GM12878 (cell line): ENCODE measurements at regions of chr3 and their contacts with region 1.

Region 1: GRCh38 chr3:195259475-195260279 is 11.3 kb downstream of the XXYLT1 start:
- DNase-seq: peak; percentile 69
- ATAC-seq: peak; percentile 85
- H3K4me3 ChIP-seq: peak overlapping the region; percentile 77; the same call in 1 of the 2 replicates
- H3K27ac ChIP-seq: peak overlapping the region; percentile 85
- H3K4me1 ChIP-seq: peaks cover 21% of the 10 kb centered on the region
- H3K27me3 ChIP-seq: no peaks in the 10 kb centered on the region
- CTCF ChIP-seq: peak; percentile 54 to 77 (median 54); a peak in 5 of 6 replicates
- EP300 ChIP-seq: peak; percentile 64 to 82; a peak in 3 of 4 replicates
- POLR2A ChIP-seq: peak; percentile 85
- RAD21 ChIP-seq: peak; percentile 89

Region 2: DNA sequence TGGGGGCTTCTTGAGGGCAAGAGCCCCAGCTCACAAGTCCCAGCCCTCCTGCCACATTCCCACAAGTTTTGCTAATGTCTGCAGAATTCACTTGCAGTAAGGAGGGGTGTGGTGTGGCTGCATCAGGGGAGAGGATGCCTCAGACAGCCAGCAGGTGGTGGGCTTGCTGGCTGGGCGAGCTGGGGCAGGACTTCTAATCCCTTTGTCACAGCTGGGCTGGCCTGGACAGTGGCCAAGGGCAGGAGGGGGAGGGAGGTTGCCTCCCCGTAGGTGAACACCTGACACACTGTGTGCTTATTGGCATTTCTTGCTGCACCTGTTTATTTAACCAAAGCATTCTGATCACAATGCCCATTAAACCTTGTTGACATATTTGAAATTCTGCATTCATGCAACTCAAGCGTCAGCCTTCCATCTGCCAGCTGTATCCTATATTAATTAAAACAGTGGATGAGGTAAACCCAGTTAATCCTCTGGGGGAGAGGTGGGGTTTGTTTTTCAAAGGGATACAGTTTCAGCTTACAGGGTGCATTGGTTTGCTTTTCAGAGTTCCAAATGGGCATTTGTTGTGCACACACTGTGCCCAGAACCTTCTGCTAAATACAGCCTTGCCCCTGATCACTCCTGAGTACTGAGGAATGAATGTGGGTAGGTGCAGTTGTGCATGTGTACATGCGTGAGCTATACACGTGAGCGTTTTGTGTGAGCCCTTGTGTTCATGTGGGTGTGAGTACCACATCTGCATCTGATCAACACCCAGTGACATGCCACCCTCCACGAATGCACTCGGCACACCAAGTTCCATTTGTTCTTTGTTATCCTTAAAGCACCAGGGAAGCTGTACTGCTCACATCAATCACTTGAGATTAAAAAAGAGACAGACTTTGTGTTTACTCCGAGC is 257.5 kb before region 1 on chr3:
- CTCF ChIA-PET with region 1: interaction called, 7 read pairs
- POLR2A ChIA-PET with region 1: no interaction called
- RAD21 ChIA-PET with region 1: interaction called, 7 read pairs
- SMC1A ChIA-PET with region 1: no interaction called
- in situ Hi-C with region 1: loop called (anchors 5 kb)
- intact Hi-C with region 1: loop called (anchors 1 kb)
- DNase-seq: peak; percentile 4
- ATAC-seq: peak; percentile 95
- H3K4me3 ChIP-seq: no peak overlapping the region
- H3K27ac ChIP-seq: no peak overlapping the region
- H3K4me1 ChIP-seq: no peaks in the 10 kb centered on the region
- H3K27me3 ChIP-seq: peaks cover 2% of the 10 kb centered on the region in 2 experiments; a peak in 1 of 4 replicates
- CTCF ChIP-seq: peak; percentile 66 to 81 (median 77)
- EP300 ChIP-seq: no peak
- POLR2A ChIP-seq: no peak
- RAD21 ChIP-seq: peak; percentile 74

Region 3: GRCh38 chr3:195133462-195133861 is 126.2 kb before region 1 on chr3:
- CTCF ChIA-PET with region 1: interaction called, 6 read pairs
- POLR2A ChIA-PET with region 1: interaction called, 9 read pairs
- RAD21 ChIA-PET with region 1: interaction called, 18 read pairs
- SMC1A ChIA-PET with region 1: interaction called, 24 read pairs
- in situ Hi-C with region 1: no loop called
- intact Hi-C with region 1: loop called (anchors 1 kb)
- DNase-seq: no peak
- ATAC-seq: no peak
- H3K4me3 ChIP-seq: no peak overlapping the region
- H3K27ac ChIP-seq: peak overlapping the region; percentile 38; the same call in 1 of the 2 replicates
- H3K4me1 ChIP-seq: peaks cover 43% of the 10 kb centered on the region
- H3K27me3 ChIP-seq: no peaks in the 10 kb centered on the region
- CTCF ChIP-seq: no peak; a peak in 1 of 6 replicates
- EP300 ChIP-seq: no peak
- POLR2A ChIP-seq: peak; percentile 50; the same call in 1 of the 2 replicates
- RAD21 ChIP-seq: peak; percentile 44; the same call in 1 of the 2 replicates

Region 4: DNA sequence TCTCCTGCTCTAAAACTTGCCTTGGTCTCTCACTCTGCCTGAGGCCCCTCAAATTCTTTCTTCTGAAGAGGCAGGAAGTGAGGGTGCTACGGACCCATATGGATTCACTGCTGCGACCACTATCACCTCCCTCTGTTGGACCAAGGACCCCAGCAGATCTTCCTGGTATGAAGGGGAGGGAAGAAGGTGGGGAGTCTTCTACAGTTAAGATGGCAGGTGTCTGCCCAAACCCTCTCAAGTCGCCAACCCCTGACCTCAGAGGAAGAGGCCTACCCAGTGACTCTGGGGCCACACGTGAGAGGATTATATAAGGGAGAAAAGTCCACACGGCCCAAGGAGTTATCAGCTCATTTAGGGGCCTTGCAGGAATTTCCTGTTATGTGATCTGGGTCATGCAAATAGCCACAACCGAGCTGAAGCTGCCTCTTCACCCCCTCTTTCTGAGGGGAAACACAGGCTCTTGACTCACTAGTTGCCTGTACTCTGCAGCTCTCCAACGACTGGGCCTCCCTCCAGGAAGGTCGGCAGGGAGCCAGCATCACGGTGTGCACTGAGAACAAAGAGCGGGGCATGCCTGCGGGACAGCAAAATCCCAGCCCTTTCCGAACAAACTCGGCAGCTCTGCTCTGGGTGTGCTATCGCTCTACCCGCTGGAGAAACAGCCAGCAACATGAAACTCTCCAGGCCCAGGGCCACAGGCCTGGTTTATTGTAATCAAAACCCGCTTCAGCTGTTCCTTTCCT is 104.7 kb before region 1 on chr3:
- CTCF ChIA-PET with region 1: interaction called, 6 read pairs
- POLR2A ChIA-PET with region 1: no interaction called
- RAD21 ChIA-PET with region 1: interaction called, 14 read pairs
- SMC1A ChIA-PET with region 1: interaction called, 8 read pairs
- in situ Hi-C with region 1: no loop called
- intact Hi-C with region 1: no loop called
- DNase-seq: no peak
- ATAC-seq: peak; percentile 7; the same call in 1 of the 3 replicates
- H3K4me3 ChIP-seq: 0 out of 2 replicates have a peak overlapping the region, but pooled peaks have one; percentile 12
- H3K27ac ChIP-seq: peak overlapping the region; percentile 73
- H3K4me1 ChIP-seq: peaks cover 44% of the 10 kb centered on the region
- H3K27me3 ChIP-seq: no peaks in the 10 kb centered on the region
- CTCF ChIP-seq: no peak
- EP300 ChIP-seq: no peak
- POLR2A ChIP-seq: peak; percentile 54
- RAD21 ChIP-seq: peak; percentile 8; the same call in 1 of the 2 replicates